Right cardiac atrium (tissue), 5 donors: ENCODE measurements at regions of chr6 and their contacts with region 1.

Region 1: DNA sequence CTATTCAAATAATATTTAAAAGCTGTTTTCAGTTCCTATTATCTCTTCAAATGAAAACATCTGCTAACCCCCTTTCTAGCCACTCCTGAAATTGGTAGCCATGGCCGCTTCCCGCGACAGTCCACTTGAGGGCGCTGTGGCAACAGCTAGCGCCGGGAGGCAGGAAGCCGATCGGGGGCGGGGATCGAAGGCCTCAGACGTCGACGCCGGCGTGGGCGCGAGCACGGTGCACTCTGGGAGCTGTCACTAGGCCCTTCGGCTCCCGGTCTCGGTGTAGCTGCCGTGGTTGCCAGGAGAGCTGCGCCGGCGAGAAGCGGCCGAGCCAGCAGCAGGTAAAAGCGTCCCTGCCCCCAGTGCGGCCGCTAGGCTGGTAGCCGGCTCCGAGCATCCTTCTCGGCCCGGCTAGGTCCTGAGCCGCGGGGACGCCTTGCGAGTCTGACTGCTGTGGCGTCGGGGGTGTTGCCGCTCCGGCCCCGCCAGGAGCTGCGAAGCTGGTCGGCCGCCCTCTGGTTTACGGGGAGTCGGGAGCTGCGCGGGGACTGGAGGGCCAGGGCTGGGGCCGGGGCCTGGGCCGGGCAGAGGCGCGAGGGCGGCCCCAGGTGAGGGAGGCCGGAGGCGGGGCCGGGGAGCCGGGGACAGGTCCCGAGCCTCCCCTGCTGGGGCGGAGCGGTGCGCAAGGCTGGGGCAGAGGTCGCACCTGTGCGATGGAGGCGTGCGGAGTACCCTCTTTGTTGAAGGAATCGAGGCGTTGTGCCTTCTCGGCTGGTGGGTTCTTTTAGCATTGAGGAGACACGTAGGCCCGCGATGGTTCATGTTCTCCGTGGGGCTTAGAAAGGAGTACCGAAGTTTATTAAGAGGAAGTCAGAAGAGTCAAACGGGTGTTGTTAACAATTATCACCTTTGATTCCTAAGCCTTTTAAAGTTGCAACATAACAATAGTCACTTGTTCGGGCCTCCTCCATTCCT is at the start of gene DOP1A:
- DNase-seq: peak; percentile 97 to 99 (median 98)
- ATAC-seq: peak; percentile 97 to 98
- H3K4me3 ChIP-seq: peak within 1 kb of the TSS; percentile 81
- H3K27ac ChIP-seq: peak within 1 kb of the TSS; percentile 75
- H3K4me1 ChIP-seq: peaks cover 2% of the 10 kb centered on the region
- H3K27me3 ChIP-seq: no peaks in the 10 kb centered on the region
- total RNA-seq, gene DOP1A: 19.1 to 19.9 (median 19.5) TPM

Region 2: GRCh38 chr6:83192871-83193746 is 125.4 kb after region 1 on chr6 and contains the starts of genes PGM3 and RWDD2A:
- intact Hi-C with region 1: loop called in 1 of 4 experiments (anchors 10 kb)
- DNase-seq: peak; percentile 92 to 97 (median 96)
- ATAC-seq: peak; percentile 99
- H3K4me3 ChIP-seq: peak within 1 kb of the TSS; percentile 78
- H3K27ac ChIP-seq: peak within 1 kb of the TSS; percentile 71
- H3K4me1 ChIP-seq: peaks cover 2% of the 10 kb centered on the region
- H3K27me3 ChIP-seq: no peaks in the 10 kb centered on the region
- total RNA-seq, gene PGM3: 15.1 to 31.1 (median 18.5) TPM
- total RNA-seq, gene RWDD2A: 4.3 to 6.3 (median 5.7) TPM

Region 3: GRCh38 chr6:83215131-83216047 is 147.7 kb after region 1 on chr6:
- intact Hi-C with region 1: loop called in 1 of 4 experiments (anchors 5 kb)
- DNase-seq: peak; percentile 48 to 83 (median 63)
- ATAC-seq: peak; percentile 95 to 96
- H3K4me3 ChIP-seq: no peak overlapping the region
- H3K27ac ChIP-seq: no peak overlapping the region
- H3K4me1 ChIP-seq: no peaks in the 10 kb centered on the region
- H3K27me3 ChIP-seq: no peaks in the 10 kb centered on the region